AG04449 (cell line): ENCODE measurements at regions of chr1 and their contacts with region 1.

Region 1: DNA sequence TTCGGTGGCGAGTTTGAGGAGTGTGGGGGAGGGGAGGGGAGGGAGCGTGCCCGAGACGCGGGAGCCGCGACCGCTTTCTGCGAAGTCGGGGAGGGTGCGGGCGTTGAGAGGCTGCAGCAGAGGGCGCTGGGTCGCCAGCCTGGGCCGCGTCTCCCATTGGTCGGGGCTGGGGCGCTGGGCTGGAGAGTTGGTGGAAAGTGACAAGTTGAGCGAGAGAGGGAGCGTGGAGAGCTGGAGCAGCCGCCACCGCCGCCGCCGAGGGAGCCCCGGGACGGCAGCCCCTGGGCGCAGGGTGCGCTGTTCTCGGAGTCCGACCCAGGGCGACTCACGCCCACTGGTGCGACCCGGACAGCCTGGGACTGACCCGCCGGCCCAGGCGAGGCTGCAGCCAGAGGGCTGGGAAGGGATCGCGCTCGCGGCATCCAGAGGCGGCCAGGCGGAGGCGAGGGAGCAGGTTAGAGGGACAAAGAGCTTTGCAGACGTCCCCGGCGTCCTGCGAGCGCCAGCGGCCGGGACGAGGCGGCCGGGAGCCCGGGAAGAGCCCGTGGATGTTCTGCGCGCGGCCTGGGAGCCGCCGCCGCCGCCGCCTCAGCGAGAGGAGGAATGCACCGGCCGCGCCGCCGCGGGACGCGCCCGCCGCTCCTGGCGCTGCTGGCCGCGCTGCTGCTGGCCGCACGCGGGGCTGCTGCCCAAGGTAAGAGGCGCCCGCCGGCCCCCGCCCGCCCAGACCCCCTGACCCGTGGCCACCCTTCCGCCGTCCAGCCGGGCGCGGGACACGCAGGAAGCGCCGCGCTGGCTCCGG is at the start of gene ROR1:
- DNase-seq: no peak
- H3K4me3 ChIP-seq: peak within 1 kb of the TSS; percentile 72
- CTCF ChIP-seq: peak; percentile 94

Region 2: GRCh38 chr1:63758791-63759190 is 15.2 kb before region 1 on chr1:
- CTCF ChIA-PET with region 1: interaction called, 12 read pairs
- POLR2A ChIA-PET with region 1: no interaction called
- DNase-seq: no peak
- H3K4me3 ChIP-seq: no peak overlapping the region
- CTCF ChIP-seq: no peak

Region 3: GRCh38 chr1:63813829-63814277 is 39.8 kb after region 1 on chr1:
- CTCF ChIA-PET with region 1: no interaction called
- POLR2A ChIA-PET with region 1: no interaction called
- DNase-seq: no peak
- H3K4me3 ChIP-seq: no peak overlapping the region
- CTCF ChIP-seq: no peak